IMR-90 (cell line): ENCODE measurements at regions of chr19 and their contacts with region 1.

Region 1: DNA sequence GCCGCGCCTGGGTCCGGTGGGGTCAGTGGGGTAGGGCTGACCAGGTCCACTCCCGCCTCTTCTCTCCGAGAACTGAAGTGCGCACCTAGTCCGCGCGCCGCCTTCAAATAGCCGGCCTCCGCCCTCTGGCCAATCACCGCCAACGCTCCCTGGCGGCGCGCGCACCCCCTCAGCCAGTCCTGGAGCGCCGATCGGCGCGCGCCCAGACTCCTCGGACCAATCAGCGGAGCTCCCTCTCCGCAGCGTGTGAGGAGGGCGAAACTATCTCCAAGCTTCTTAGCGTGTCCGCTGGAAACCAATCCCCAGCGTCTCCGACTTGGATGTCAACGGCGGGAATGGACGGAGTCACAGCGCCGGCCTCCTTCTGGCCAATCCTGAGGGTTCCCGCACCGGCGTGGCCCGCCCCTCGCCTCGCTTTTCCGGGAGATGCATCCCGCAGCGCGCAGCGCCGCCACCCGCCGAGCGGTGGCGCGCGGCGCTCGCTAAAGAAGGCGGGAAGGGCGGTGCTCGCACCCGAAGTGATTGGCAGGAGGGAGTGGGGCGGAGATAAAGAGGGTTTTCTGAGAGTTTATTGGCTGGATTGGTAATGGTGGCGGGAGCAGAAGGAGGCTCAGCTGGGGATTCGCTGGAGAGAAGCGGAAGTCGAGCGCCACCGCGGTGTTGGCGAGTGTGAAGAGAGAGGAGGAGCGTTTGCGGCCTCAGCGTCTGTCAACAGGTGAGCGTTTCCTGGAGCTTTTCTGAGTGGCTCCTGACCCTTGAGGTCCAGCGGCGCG is at the start of gene ASF1B:
- DNase-seq: peak; percentile 100
- ATAC-seq: peak; percentile 91
- H3K4me3 ChIP-seq: peak within 1 kb of the TSS; percentile 66
- H3K27ac ChIP-seq: peak within 1 kb of the TSS; percentile 53
- H3K4me1 ChIP-seq: peaks cover 6% of the 10 kb centered on the region
- H3K27me3 ChIP-seq: no peaks in the 10 kb centered on the region
- CTCF ChIP-seq: peak; percentile 98
- POLR2A ChIP-seq: peak; percentile 80
- RAD21 ChIP-seq: peak; percentile 87
- total RNA-seq, gene ASF1B: 10.4 and 13.1 TPM in 2 replicates

Region 2: DNA sequence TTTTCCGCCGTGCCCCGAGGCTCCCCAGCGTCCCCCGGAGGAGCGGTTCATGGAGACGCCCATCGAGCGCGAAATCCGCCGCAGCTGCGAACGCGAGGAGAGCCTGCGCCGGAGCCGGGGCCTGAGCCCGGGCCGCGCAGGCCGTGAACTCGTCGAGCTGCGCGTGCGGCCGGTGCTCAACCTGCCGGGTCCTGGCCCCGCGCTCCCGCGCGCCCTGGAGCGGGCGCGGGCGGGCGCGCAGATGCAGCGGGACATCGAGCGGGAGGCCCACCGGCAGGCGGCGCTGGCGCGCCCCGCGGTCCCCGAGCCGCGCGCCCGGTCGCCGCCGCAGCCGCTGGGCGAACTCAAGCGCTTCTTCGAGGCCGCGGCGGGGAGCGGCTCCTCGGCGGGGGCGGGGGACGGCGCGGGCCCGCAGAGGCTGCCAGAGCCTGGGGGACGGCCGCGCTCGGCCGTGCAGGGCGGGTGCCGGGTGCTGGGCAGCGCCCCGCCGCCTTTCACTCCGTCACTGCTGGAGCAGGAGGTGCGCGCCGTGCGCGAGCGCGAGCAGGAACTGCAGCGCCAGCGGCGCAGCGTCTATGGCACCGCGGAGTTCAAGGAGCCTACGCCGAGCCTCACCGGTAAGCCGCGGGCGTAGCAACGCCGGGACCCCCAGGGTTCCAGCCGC is 63.3 kb before region 1 on chr19:
- CTCF ChIA-PET with region 1: no interaction called
- POLR2A ChIA-PET with region 1: no interaction called
- dilution Hi-C with region 1: no loop called
- in situ Hi-C with region 1: no loop called
- intact Hi-C with region 1: no loop called
- DNase-seq: peak; percentile 82
- ATAC-seq: peak; percentile 79
- H3K4me3 ChIP-seq: peak overlapping the region; percentile 61
- H3K27ac ChIP-seq: peak overlapping the region; percentile 13; the same call in 1 of the 2 replicates
- H3K4me1 ChIP-seq: peaks cover 10% of the 10 kb centered on the region
- H3K27me3 ChIP-seq: peaks cover 2% of the 10 kb centered on the region; the same call in 1 of the 2 replicates
- CTCF ChIP-seq: peak; percentile 66
- POLR2A ChIP-seq: no peak
- RAD21 ChIP-seq: peak; percentile 29

Region 3: DNA sequence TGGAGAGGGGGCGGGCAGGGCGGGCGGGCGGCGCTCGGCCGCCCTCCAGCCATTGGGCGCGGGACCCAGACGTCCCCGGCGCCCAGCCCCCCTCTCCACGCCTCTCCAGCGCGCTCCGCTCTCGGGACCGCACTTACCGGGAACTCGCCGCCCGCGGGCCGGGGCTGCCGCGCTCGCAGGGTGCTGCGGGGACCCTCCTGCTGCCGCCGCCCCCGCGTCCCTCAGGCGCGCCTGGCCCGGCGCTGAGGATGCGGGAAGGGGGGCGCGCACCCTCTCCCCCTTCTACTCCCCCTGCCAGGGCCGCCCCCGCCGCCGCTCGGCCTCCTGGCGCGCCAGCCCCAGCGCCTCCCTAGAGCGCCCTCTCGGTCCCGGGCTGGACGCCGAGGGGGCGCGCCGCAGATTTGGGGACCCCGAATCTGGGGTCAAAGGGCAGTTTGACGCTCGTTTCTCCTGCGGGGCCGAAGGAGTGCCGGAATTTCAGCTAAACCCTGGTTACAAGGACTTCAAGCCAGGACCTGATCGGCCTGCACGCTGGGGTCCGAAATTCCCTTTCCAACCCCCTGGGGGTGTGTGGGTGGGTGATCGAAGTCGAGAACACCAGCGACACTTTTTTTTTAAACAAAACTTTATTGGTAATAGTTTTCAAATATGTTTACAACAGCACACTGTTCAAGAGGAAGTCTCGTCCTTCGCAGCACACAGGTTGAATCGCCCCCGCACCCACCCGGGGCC is 45.4 kb before region 1 on chr19:
- CTCF ChIA-PET with region 1: interaction called, 3 read pairs
- POLR2A ChIA-PET with region 1: no interaction called
- dilution Hi-C with region 1: no loop called
- in situ Hi-C with region 1: no loop called
- intact Hi-C with region 1: loop called (anchors 2 kb)
- DNase-seq: peak; percentile 64
- ATAC-seq: peak; percentile 84
- H3K4me3 ChIP-seq: peak overlapping the region; percentile 80
- H3K27ac ChIP-seq: peak overlapping the region; percentile 47
- H3K4me1 ChIP-seq: no peaks in the 10 kb centered on the region
- H3K27me3 ChIP-seq: no peaks in the 10 kb centered on the region
- CTCF ChIP-seq: peak; percentile 16; the same call in 1 of the 2 replicates
- POLR2A ChIP-seq: no peak
- RAD21 ChIP-seq: no peak

Region 4: DNA sequence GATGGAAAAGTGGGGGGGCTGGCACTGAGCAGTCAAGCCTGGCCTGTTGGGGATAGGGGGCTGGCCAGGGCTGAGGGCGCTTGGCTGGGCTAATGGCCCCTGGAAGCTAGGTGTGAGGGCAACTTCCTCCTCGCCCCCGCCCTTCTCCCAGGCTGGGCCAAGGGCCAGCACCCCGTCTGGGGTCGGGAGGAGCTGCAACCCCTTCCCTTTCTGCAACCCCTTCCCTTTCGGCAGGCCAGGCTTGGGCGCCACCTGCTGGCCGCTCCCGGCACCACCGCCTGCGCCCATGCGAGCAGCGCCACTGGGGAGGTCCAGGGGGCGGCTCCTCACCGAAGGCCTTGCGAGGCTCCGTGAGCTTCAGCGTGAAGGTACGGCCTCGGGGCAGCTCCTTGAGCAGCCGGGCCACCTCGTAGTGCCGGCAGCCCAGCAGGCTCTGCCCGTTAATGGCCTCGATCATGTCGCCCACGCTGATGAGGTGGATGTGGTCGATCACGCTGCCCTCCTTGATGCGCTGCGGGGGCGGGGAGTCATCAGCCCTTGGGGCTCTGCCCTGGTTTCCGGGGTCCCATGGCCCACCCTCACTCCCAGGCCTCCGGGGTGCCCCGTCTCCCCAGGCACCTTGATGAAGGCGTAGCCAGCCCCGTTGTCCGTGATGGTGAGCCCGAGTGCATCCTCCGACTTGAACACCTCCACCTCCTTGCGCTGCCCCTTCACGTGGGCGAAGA is 343.4 kb after region 1 on chr19:
- CTCF ChIA-PET with region 1: no interaction called
- POLR2A ChIA-PET with region 1: no interaction called
- dilution Hi-C with region 1: no loop called
- in situ Hi-C with region 1: no loop called
- intact Hi-C with region 1: loop called (anchors 5 kb)
- DNase-seq: peak; percentile 20
- ATAC-seq: peak; percentile 38
- H3K4me3 ChIP-seq: no peak overlapping the region
- H3K27ac ChIP-seq: peak overlapping the region; percentile 4; the same call in 1 of the 2 replicates
- H3K4me1 ChIP-seq: peaks cover 30% of the 10 kb centered on the region
- H3K27me3 ChIP-seq: no peaks in the 10 kb centered on the region
- CTCF ChIP-seq: peak; percentile 69
- POLR2A ChIP-seq: no peak
- RAD21 ChIP-seq: peak; percentile 46